ENCODE measurements at regions of chr20 and their contacts with region 1.

Region 1: DNA sequence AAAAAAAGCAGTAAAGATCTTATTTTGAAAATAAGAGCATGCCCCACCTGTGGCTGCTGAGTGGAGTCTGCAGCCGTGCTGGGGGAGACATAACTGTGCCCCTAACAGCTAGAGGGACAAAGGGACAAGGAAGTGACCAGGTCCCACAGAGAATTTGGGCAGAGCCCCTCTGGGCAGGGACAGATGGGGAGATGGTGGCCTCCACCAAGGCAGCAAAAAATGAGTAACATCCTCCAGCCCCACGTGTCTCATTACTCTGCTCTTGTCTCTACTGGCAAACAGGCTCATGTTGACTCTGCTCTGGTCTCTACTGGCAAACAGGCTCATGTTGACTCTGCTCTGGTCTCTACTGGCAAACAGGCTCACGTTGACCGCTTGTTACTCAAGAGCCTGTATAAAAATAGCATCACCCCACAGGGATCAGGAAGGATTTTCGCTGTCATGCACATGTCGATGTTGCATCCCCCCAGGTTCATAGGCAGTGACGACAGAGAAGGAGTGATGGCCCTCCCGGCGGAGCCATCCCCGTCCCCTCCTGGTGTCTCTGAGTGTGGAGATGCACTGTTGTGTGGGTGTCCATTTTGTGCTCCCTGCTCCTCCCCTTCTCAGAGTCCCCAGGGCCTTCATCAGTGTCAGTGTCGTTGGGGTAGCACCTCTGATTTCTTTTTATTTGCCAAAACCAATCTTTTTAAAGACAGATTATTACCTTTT is 17.3 kb upstream of the PCMTD2 start:
- DNase-seq: no peak
- H3K4me3 ChIP-seq: no peak overlapping the region
- H3K27ac ChIP-seq: no peak overlapping the region
- H3K4me1 ChIP-seq: no peaks in the 10 kb centered on the region
- H3K27me3 ChIP-seq: peaks cover 63% of the 10 kb centered on the region
- CTCF ChIP-seq: no peak

Region 2: DNA sequence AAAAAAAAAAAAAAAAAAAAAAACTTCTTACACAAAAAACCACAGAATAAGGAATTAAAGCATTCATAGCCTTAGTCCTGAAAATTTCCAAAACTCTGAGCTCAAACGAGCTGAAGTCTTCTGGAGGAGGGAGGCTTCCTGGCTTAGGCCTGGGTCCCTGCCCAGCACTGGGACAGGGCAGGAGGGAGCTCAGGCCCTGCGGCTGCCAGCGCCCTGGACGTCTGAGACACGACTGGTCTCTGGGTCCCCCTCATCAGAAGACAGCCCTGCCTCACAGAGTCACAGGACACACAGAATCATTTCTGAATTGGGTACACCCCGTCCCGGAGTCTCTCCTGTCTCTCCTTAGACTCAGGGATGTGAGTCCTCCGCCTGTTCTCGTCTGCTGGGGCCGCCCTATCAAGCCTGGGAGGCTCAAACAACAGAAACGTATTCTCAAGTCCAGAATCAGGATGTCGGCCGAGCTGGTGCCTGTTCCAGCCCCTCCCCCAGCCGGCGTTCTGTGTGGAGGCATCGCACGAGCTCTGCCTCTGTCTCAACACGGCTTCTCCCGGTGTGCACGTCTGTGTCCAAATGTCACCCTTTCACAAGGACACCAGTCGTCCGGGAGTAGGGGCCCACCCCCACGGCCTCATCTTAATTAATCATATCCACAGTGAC is 446.6 kb before region 1 on chr20:
- CTCF ChIA-PET with region 1: interaction called, 14 read pairs
- POLR2A ChIA-PET with region 1: no interaction called
- intact Hi-C with region 1: no loop called
- DNase-seq: no peak
- H3K4me3 ChIP-seq: no peak overlapping the region
- H3K27ac ChIP-seq: no peak overlapping the region
- H3K4me1 ChIP-seq: no peaks in the 10 kb centered on the region
- H3K27me3 ChIP-seq: peaks cover 7% of the 10 kb centered on the region; the same call in 1 of the 2 replicates
- CTCF ChIP-seq: no peak

Region 3: DNA sequence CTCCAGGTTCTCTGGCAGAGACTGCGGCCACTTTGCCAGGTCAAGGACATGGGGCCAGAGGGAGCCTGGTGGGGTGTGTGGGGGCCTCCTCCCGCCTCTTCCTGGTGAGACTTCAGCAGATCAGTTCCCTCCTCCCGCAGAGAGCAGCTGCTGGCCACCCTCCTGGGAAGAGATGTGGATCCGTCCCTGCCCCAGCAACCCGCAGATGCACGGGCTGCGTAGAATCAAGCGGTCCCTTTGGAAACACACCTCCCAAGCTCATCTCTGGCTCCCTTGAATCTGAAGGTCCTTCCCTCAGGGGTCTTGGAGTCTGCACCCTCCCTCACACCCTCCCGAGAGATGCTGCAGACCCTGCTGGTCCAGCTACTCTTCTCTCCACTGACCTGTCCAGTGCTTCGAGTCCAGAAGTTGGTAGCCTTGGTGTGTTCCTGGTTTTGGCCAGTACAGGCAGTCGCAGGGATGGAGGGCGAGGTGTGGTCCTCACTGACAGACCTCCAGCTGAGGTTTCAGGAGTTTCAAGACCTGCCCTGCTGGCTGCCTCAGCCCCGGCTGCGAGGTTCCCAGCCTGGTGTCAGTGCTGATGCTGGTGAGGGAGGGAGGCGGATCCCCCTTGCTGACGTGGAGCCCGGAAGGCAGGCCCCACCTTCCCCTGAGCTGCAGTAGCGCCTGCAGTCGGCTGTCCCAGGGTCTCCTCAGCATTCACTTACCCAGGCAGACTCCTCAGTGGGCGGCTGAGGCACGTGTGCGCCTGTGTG is 131.1 kb before region 1 on chr20 and contains the start of gene NPBWR2:
- CTCF ChIA-PET with region 1: no interaction called
- POLR2A ChIA-PET with region 1: no interaction called
- intact Hi-C with region 1: no loop called
- DNase-seq: peak in 1 of 2 experiments; percentile 32
- H3K4me3 ChIP-seq: no peak within 1 kb of the TSS
- H3K27ac ChIP-seq: no peak within 1 kb of the TSS
- H3K4me1 ChIP-seq: no peaks in the 10 kb centered on the region
- H3K27me3 ChIP-seq: peaks cover 93% of the 10 kb centered on the region
- CTCF ChIP-seq: no peak
- total RNA-seq, gene NPBWR2: not detected in 2 replicates

Measured in PC-9 (cell line).